Heart right ventricle (tissue), 16 donors: ENCODE measurements at regions of chr19 and their contacts with region 1.

Region 1: GRCh38 chr19:35716801-35717666 is 769 bp upstream of the KMT2B start:
- DNase-seq: peak; percentile 95 to 96
- ATAC-seq: peak; percentile 93 to 97 (median 95)
- H3K4me3 ChIP-seq: peak overlapping the region; percentile 36 to 98 (median 82)
- H3K27ac ChIP-seq: peak overlapping the region; percentile 78 to 97 (median 92)
- H3K4me1 ChIP-seq: peaks cover 6 to 34% (median 27%) of the 10 kb centered on the region in 9 donors
- H3K27me3 ChIP-seq: no peaks in the 10 kb centered on the region
- CTCF ChIP-seq: peak; percentile 77 to 96 (median 93)

Region 2: DNA sequence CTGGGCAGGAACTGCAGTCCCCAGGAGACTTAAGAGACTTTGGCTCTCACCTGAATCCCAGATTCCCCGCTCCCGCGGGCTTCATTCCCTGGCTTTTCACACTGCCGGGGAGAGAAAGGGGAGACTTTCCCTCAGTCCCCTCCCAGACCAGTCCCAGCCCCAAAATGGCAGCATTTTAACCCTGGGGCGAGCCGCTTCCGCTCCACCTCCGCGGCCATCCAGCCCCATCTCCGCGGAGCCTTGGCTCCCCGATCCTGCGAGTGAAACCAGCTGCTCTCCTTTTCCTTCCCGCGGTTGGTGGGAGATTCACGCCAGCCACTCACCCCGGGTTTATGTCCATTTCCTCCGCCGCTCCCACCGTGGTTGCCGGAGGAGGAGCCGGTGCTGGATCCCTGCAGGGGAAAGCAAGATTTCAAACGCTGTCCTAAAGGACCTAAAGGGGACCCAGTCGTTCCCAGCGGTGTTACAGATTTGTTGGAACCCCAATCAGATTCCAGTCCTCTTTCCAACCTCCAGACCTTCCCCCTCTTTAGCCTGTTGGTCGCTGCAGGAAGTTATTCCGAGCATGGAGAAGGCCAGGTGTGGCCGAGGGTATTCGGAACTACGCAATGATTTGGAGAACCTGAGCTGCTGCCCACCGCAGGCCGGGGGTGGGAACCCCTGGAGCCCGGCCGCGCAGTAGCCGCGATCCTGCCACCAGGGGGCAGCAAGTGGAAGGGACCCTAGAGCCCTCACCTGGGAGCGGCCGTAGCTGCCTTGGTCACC is 207.0 kb before region 1 on chr19:
- intact Hi-C with region 1: loop called in 1 of 10 experiments (anchors 5 kb)
- DNase-seq: peak; percentile 68 to 79
- ATAC-seq: peak; percentile 80 to 92 (median 87)
- H3K4me3 ChIP-seq: peak overlapping the region in 9 of 10 donors; percentile 27 to 56 (median 44)
- H3K27ac ChIP-seq: no peak overlapping the region
- H3K4me1 ChIP-seq: peaks cover 0 to 17% (median 13%) of the 10 kb centered on the region in 9 donors
- H3K27me3 ChIP-seq: peaks cover 0 to 78% (median 57%) of the 10 kb centered on the region in 7 donors
- CTCF ChIP-seq: peak; percentile 78 to 97 (median 94)

Region 3: DNA sequence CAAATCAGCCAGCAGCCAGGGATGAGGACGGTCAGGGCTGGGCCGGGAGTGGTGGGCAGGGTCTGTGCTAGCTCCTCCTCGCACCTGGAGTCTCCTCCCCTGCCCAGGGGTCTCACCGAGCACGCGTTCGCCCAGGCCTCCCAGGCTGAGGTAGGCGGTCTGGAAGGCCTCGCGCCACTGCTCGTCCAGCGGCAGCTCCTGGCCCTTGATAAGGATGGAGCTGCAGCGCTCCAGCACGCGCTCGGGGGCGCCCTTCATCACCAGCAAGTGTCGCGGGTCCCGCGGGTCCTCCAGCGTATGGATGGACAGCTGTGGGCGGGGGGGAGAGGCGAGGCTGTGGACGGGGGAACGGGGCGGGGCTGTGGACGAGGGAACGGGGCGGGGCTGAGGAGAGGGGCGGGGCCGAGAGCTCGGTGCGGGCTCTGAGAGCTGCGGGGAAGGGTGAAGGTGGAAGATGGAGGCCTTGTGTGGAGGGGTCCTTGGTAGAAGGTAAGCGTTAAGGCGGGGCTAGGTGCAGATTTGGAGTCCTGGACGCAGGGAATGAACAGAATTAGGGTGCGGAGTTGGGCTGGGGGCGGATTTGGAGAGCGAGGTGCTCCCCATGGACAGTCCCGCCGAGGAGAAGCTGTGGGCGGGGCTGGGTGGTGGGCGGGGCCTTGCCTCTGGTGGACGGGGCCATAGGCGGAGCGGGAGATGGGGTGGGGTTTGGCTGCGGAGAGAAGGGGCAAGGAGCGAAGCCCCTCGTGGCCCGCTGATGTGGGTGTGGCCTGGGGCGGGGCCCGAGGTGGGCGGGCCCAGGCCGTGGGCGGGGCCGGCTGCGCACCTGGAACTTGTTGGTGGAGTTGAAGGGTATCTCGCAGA is 159.3 kb before region 1 on chr19:
- intact Hi-C with region 1: loop called in 2 of 10 experiments (anchors 5 to 10 kb)
- DNase-seq: peak; percentile 35 to 60
- ATAC-seq: peak; percentile 53 to 75 (median 68)
- H3K4me3 ChIP-seq: peak overlapping the region in 8 of 10 donors; percentile 14 to 44 (median 38)
- H3K27ac ChIP-seq: no peak overlapping the region
- H3K4me1 ChIP-seq: peaks cover 2 to 9% (median 7%) of the 10 kb centered on the region in 9 donors
- H3K27me3 ChIP-seq: peaks cover 6 to 64% (median 57%) of the 10 kb centered on the region in 7 donors
- CTCF ChIP-seq: no peak

Region 4: DNA sequence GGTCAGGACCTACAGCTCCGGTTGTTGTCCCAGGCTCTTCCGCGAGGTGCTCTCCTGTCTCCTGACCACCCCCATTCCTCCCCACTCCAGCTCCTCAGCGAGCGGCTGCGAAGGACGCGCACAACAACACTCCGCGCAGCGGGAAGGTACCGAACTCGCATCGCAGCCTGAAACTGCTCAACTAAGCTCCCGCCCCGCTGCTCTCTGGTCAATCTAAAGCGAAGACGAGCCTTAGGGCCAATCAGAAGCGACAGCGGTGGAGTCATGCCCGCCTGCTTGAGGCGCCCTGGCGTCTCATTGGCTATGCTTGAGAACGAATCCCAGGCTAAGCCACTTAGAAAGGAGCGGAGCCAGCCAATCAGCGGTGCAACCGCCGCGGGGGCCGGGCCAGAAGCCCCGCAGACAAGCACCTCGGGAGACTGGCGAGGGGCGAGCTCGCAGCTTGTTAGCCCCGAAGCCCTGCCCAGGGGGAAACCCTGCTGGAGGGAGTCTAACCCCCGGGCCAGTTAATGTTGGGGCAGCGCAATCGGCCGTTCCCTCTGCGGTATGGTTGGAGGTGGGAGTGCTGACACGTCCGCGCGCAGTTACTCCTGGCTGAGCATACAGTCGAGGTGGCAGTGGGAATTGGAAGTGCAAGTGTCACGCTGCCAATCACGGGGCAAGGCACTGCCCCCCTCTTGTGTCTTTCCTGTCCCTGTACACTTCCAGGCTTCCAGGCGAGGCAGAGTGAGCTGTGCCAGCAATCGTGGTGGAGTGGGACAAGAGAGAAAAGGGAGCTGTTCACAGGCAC is 14.6 kb before region 1 on chr19:
- intact Hi-C with region 1: loop called in 1 of 10 experiments (anchors 1 kb)
- DNase-seq: peak; percentile 93 to 96
- ATAC-seq: peak; percentile 98 to 100 (median 100)
- H3K4me3 ChIP-seq: peak overlapping the region; percentile 33 to 71 (median 59)
- H3K27ac ChIP-seq: peak overlapping the region in 4 of 10 donors; percentile 51 to 76 (median 58)
- H3K4me1 ChIP-seq: peaks cover 0 to 16% (median 7%) of the 10 kb centered on the region in 9 donors
- H3K27me3 ChIP-seq: peaks cover 0 to 18% (median 10%) of the 10 kb centered on the region in 7 donors
- CTCF ChIP-seq: no peak

Region 5: GRCh38 chr19:35757749-35758608 is 40.9 kb after region 1 on chr19 and contains the start of gene PROSER3:
- intact Hi-C with region 1: loop called in 2 of 10 experiments (anchors 1 to 5 kb)
- DNase-seq: peak; percentile 98 to 99
- ATAC-seq: peak; percentile 69 to 91 (median 86)
- H3K4me3 ChIP-seq: peak within 1 kb of the TSS; percentile 53 to 99 (median 82)
- H3K27ac ChIP-seq: peak within 1 kb of the TSS; percentile 88 to 99 (median 98)
- H3K4me1 ChIP-seq: peaks cover 4 to 54% (median 37%) of the 10 kb centered on the region in 9 donors
- H3K27me3 ChIP-seq: peaks cover 0 to 15% (median 0%) of the 10 kb centered on the region in 7 donors
- CTCF ChIP-seq: no peak
- total RNA-seq, gene PROSER3: 7.0 to 14.7 (median 9.7) TPM